Activated B cell treated with CpG ODN at 0.5 μM for 24 hours (primary cell): ENCODE measurements at regions of chr22 and their contacts with region 1.

Region 1: GRCh38 chr22:25564320-25564978 is at the start of gene GRK3:
- DNase-seq: peak; percentile 74
- ATAC-seq: peak; percentile 64
- H3K4me3 Mint-ChIP-seq: peak within 1 kb of the TSS; percentile 98
- H3K27ac Mint-ChIP-seq: peak within 1 kb of the TSS; percentile 99
- H3K4me1 Mint-ChIP-seq: peaks cover 81% of the 10 kb centered on the region
- H3K27me3 Mint-ChIP-seq: no peaks in the 10 kb centered on the region
- CTCF ChIP-seq: no peak
- total RNA-seq, gene GRK3: 66.6 and 66.7 TPM in 2 replicates

Region 2: DNA sequence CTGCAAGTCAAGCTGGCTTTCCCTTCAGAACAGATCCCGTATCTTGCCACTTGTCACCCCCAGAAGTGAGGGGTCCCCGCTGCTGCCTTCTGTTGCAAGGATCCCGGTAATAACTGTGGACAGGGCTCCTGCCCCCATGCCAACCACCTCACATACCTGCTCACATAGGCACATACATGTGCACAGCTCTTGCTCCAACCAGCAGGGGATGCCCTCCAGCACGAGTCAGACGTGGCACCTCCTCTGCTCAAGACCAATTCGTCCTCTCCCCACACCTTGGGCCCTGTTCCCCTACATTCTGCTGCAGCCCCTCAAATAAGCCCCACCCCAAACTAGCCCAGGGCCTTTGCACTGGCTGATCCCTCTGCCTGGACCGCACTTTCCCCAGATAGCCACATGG is 181.7 kb before region 1 on chr22:
- CTCF ChIA-PET with region 1: no interaction called
- POLR2A ChIA-PET with region 1: no interaction called
- intact Hi-C with region 1: no loop called
- DNase-seq: no peak
- ATAC-seq: no peak
- H3K4me3 Mint-ChIP-seq: no peak overlapping the region
- H3K27ac Mint-ChIP-seq: no peak overlapping the region
- H3K4me1 Mint-ChIP-seq: peaks cover 21% of the 10 kb centered on the region
- H3K27me3 Mint-ChIP-seq: no peaks in the 10 kb centered on the region
- CTCF ChIP-seq: no peak

Region 3: DNA sequence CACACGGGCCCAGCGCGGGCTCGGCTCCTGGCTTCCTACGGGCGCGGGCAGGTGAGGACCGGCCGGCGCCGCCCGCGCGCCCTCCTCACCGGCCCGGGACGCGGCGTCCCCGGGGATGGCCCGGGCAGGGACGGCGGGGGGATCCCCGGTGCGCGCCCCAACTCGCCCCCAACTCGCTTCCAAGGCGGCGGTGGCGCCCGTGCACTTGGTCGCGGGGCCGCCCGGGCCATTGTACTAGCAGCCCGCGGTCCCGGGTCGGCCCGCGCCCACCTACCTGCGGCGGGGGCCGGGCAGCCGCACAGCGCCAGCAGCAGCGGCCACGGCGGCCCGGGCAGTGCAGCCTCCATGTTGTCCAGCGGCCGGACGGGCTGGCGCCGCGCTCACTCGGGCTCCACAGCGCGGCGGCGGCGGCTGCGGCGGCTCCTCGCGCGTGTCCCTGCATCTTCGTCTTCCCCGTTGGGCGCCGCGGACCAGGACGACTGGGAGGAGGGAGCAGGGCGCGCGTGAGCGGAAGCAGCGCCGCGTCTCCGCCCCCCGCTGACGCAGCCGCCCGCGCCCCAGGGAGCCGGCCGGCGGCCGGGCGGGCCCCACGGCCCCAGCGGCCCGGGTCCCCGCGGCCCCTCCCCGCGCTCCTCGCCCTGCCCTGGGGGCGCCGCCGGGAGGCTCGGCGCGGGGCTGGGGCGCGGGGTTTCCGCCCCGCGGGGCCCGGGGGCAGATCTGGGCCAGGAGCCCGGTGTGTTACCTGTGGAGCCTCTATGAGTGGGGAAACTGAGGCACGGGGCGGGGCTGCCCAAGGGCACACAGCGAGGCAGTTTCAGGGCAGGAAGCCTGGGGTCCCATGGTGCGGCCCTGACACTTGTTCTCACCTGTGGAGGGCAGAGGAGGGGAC is 159.3 kb before region 1 on chr22:
- CTCF ChIA-PET with region 1: no interaction called
- POLR2A ChIA-PET with region 1: no interaction called
- intact Hi-C with region 1: loop called (anchors 5 kb)
- DNase-seq: peak; percentile 73
- ATAC-seq: peak; percentile 87
- H3K4me3 Mint-ChIP-seq: peak overlapping the region; percentile 73
- H3K27ac Mint-ChIP-seq: no peak overlapping the region
- H3K4me1 Mint-ChIP-seq: peaks cover 43% of the 10 kb centered on the region
- H3K27me3 Mint-ChIP-seq: no peaks in the 10 kb centered on the region
- CTCF ChIP-seq: no peak

Region 4: GRCh38 chr22:25546751-25547150 is 17.7 kb before region 1 on chr22:
- CTCF ChIA-PET with region 1: interaction called, 68 read pairs
- POLR2A ChIA-PET with region 1: interaction called, 53 read pairs
- intact Hi-C with region 1: loop called (anchors 1 kb)
- DNase-seq: no peak
- ATAC-seq: peak; percentile 55
- H3K4me3 Mint-ChIP-seq: no peak overlapping the region
- H3K27ac Mint-ChIP-seq: no peak overlapping the region
- H3K4me1 Mint-ChIP-seq: peaks cover 46% of the 10 kb centered on the region
- H3K27me3 Mint-ChIP-seq: no peaks in the 10 kb centered on the region
- CTCF ChIP-seq: no peak

Region 5: GRCh38 chr22:25602916-25603315 is 38.5 kb after region 1 on chr22:
- CTCF ChIA-PET with region 1: no interaction called
- POLR2A ChIA-PET with region 1: interaction called, 3 read pairs
- intact Hi-C with region 1: loop called (anchors 5 kb)
- DNase-seq: no peak
- ATAC-seq: no peak
- H3K4me3 Mint-ChIP-seq: no peak overlapping the region
- H3K27ac Mint-ChIP-seq: no peak overlapping the region
- H3K4me1 Mint-ChIP-seq: peaks cover 63% of the 10 kb centered on the region
- H3K27me3 Mint-ChIP-seq: no peaks in the 10 kb centered on the region
- CTCF ChIP-seq: no peak

Region 6: GRCh38 chr22:25650833-25651232 is 86.4 kb after region 1 on chr22:
- CTCF ChIA-PET with region 1: interaction called, 3 read pairs
- POLR2A ChIA-PET with region 1: interaction called, 33 read pairs
- intact Hi-C with region 1: loop called (anchors 1 kb)
- DNase-seq: no peak
- ATAC-seq: peak; percentile 85
- H3K4me3 Mint-ChIP-seq: peak overlapping the region; percentile 64
- H3K27ac Mint-ChIP-seq: peak overlapping the region; percentile 88
- H3K4me1 Mint-ChIP-seq: peaks cover 76% of the 10 kb centered on the region
- H3K27me3 Mint-ChIP-seq: no peaks in the 10 kb centered on the region
- CTCF ChIP-seq: no peak

Region 7: DNA sequence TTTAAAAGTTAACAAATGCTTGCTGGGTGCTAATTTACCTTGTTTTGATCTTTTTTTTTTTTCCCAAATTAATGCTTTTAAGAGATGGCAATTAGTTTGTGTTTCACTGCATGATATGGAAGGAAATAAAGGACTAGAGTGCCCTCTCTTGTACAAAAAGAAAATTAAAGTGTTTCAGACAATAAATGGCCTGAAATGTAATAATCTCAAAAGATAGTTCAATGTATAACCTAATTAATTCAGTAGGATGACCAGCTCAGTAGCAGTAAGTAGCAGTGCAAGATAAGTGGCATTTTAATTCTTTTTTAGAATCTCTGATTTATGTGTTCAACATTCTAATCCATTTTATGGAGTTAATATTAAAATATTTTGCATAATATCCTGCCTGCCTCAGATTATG is 137.6 kb after region 1 on chr22:
- CTCF ChIA-PET with region 1: interaction called, 5 read pairs
- POLR2A ChIA-PET with region 1: no interaction called
- intact Hi-C with region 1: loop called (anchors 1 kb)
- DNase-seq: no peak
- ATAC-seq: no peak
- H3K4me3 Mint-ChIP-seq: no peak overlapping the region
- H3K27ac Mint-ChIP-seq: no peak overlapping the region
- H3K4me1 Mint-ChIP-seq: peaks cover 9% of the 10 kb centered on the region
- H3K27me3 Mint-ChIP-seq: no peaks in the 10 kb centered on the region
- CTCF ChIP-seq: no peak

Region 8: DNA sequence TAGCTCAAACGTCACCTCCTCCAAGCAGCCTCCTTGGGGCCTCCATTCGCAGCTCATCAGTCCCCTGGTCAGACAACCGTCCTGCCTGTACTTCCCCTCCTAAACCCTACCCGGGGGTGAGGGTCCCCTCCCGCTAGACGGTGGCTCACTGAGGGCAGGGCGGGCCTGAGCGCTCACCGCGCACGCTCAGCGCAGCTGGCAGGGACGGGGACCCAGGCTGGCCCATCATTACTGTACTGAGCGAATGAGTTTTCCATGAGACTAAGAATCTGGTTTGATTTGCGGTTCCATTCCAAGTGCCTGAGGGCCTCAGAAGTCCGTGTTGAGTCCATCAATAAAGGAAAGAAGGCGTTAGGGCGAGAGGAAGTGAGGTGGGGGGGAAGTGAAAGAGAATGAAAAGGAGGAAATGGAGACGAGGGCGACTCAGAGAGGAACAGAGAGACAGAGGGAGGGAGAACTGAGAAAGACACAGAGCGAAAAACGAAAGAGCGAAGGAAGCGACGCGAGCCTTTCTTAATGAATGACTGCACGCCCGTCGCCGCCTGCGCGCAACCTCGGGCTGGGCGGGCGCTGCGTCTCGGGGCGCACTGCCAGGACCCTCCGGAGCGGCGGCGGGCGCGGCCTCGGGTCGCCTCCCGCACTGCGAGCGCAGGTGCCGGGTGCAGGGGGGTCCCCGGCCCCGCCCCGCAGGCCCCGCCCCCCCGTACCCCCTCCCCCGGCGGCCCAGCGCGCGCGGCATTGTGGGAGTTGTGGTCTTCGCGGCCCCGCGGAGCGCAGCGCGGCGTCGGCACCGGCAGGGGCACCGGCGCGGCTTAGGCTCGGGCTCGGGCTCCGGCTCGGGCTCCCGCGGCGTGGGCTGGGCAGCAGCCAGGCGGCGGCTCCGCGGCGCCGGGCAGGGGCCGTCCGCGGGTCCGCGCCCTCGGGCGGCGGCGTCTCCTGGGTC is 864.3 kb after region 1 on chr22 and contains the start of gene ASPHD2:
- CTCF ChIA-PET with region 1: no interaction called
- POLR2A ChIA-PET with region 1: no interaction called
- intact Hi-C with region 1: loop called (anchors 10 kb)
- DNase-seq: peak; percentile 83
- ATAC-seq: peak; percentile 82
- H3K4me3 Mint-ChIP-seq: peak within 1 kb of the TSS; percentile 92
- H3K27ac Mint-ChIP-seq: peak within 1 kb of the TSS; percentile 98
- H3K4me1 Mint-ChIP-seq: peaks cover 59% of the 10 kb centered on the region
- H3K27me3 Mint-ChIP-seq: no peaks in the 10 kb centered on the region
- CTCF ChIP-seq: no peak
- total RNA-seq, gene ASPHD2: 15.5 TPM in 2 replicates